HCT116 (cell line): ENCODE measurements at regions of chr3 and their contacts with region 1.

Region 1: DNA sequence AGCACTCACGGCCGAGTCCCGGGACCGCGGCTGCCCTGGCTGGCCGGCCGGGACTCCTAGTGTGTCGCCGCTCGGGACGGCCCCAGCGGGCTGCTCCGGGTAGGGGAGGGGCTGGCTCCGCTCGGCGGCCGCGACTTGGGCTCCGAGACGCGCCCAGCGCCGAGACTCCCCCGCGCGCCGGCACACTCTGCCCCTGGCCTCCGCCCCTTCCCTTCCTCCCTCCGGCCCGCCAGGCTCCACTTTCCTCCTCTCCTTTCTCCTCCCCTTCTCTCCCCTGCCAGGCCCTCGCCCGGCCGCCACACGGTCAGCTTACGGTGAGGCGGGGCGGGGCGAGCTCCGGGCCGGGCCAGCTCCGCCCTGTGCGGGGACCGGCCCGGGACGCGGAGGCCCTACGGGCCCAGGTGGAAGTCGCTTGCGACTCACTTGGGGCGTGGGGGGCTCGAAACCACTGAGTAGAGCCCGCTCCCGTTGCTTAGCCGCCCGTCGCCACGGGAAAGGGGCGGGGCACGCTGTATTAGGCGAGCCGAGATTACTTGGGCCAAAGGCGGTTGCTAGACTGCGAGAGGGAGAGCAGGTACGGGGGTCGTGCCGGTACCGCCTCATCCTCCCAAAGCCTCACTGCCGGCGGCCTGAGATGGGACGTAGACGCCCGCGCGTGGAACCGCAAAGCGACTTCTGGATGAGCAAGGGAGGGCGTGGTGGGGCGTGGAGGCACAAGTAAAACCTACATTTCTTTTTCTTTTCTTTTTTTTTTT is at the start of gene ITGB5:
- DNase-seq: peak; percentile 29
- ATAC-seq: peak; percentile 79
- H3K4me3 ChIP-seq: peak within 1 kb of the TSS; percentile 61 to 78
- H3K27ac ChIP-seq: peak within 1 kb of the TSS; percentile 88
- H3K4me1 ChIP-seq: peaks cover 36 to 53% of the 10 kb centered on the region in 2 experiments
- H3K27me3 ChIP-seq: no peaks in the 10 kb centered on the region
- CTCF ChIP-seq: no peak
- POLR2A ChIP-seq: peak; percentile 15
- RAD21 ChIP-seq: no peak
- total RNA-seq, gene ITGB5: 77.8 TPM

Region 2: GRCh38 chr3:124768812-124769211 is 118.5 kb before region 1 on chr3:
- CTCF ChIA-PET with region 1: no interaction called
- POLR2A ChIA-PET with region 1: no interaction called
- RAD21 ChIA-PET with region 1: no interaction called
- intact Hi-C with region 1: loop called (anchors 1 kb)
- DNase-seq: no peak
- ATAC-seq: peak; percentile 98
- H3K4me3 ChIP-seq: no peak overlapping the region
- H3K27ac ChIP-seq: no peak overlapping the region
- H3K4me1 ChIP-seq: peaks cover 0 to 5% of the 10 kb centered on the region in 2 experiments; a peak in 1 of 4 replicates
- H3K27me3 ChIP-seq: no peaks in the 10 kb centered on the region
- CTCF ChIP-seq: peak; percentile 51 to 73 (median 63); a peak in 5 of 6 replicates
- POLR2A ChIP-seq: no peak
- RAD21 ChIP-seq: peak; percentile 65

Region 3: GRCh38 chr3:124786441-124787241 is 100.7 kb before region 1 on chr3:
- CTCF ChIA-PET with region 1: interaction called, 4 read pairs
- POLR2A ChIA-PET with region 1: no interaction called
- RAD21 ChIA-PET with region 1: no interaction called
- intact Hi-C with region 1: loop called (anchors 1 kb)
- DNase-seq: peak; percentile 8
- ATAC-seq: peak; percentile 49
- H3K4me3 ChIP-seq: no peak overlapping the region
- H3K27ac ChIP-seq: peak overlapping the region; percentile 1; the same call in 1 of the 2 replicates
- H3K4me1 ChIP-seq: peaks cover 11% of the 10 kb centered on the region in 2 experiments; a peak in 3 of 4 replicates
- H3K27me3 ChIP-seq: no peaks in the 10 kb centered on the region
- CTCF ChIP-seq: peak; percentile 13 to 70 (median 63); a peak in 4 of 6 replicates
- POLR2A ChIP-seq: no peak
- RAD21 ChIP-seq: peak; percentile 83

Region 4: DNA sequence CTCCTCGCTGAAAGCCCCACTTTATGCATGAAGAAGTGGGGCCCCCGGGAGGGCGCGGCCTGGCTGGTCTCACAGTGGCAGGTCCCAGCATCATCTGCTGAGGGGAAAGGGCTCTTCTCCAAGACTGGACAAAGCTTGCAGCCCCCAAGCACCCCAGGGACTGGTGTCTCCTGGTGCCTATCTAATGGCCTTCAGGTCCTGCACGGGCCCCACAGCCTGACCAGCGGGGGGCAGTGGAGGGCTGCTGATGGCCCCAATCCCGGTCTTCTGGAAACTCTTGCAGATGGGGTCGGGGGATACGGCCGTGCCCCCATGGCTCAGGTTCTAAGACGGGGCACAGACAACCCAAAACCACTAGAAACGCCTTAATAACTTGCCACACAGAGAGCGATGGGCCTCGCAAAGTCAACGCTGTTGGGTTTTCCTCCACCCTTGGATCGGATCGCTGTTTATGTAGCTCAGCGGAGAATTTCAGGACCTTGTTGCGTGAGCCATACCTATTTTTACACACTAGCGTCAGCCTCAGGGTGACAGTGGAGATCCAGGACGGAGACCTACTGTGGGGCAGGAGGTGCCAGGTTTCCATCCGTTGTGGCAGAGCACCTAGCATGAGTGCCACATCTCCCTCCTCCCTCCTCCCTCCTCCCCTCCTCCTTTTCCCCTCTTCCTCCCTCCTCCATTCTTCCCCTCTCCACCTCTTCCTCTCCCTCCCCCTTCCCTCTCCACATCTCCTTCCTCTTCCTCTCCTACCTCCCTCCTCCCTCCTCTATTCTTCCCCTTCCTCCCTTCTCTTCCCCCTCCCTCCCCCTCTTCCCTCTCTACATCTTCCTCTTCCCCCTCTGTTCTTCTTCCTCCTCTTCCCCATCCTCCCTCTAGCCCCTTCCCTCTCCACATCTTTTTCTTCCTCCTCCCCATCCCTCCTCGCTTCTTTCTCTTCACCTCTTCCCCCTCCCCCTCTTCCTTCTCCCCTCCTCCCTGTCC is 1372.3 kb after region 1 on chr3:
- CTCF ChIA-PET with region 1: no interaction called
- POLR2A ChIA-PET with region 1: no interaction called
- RAD21 ChIA-PET with region 1: no interaction called
- intact Hi-C with region 1: no loop called
- DNase-seq: no peak
- ATAC-seq: peak; percentile 77
- H3K4me3 ChIP-seq: no peak overlapping the region
- H3K27ac ChIP-seq: no peak overlapping the region
- H3K4me1 ChIP-seq: peaks cover 13 to 33% of the 10 kb centered on the region in 2 experiments; a peak in 3 of 4 replicates
- H3K27me3 ChIP-seq: no peaks in the 10 kb centered on the region
- CTCF ChIP-seq: peak; percentile 70 to 79 (median 78); a peak in 5 of 6 replicates
- POLR2A ChIP-seq: no peak
- RAD21 ChIP-seq: peak; percentile 83